Activated CD4-positive, alpha-beta memory T cell treated with anti-CD3 and anti-CD28 coated beads for 36 hours (primary cell): ENCODE measurements at regions of chr11 and their contacts with region 1.

Region 1: GRCh38 chr11:5476184-5476819 is 12.2 kb upstream of the OR52D1 start:
- DNase-seq: peak; percentile 42
- H3K4me3 Mint-ChIP-seq: no peak overlapping the region
- H3K27ac Mint-ChIP-seq: no peak overlapping the region
- H3K4me1 Mint-ChIP-seq: no peaks in the 10 kb centered on the region
- H3K27me3 Mint-ChIP-seq: peaks cover 21% of the 10 kb centered on the region

Region 2: DNA sequence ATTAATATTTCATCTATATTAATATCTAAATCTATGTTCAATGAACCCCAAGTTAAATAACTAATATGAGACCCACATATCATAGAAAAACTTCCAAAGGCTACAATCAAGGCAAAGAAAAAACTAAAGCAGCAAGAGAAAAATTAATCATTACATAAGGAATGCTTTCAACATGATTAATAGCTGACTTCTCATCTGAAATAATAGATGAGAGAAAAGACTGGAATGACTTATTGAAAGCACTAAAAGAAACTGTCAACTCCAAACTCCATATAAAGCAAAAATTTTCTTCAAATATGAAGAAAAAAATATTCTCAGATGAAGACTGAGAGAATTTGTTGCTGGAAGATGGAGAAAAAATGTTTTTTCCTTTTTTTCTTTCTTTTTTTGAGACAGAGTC is 195.5 kb after region 1 on chr11:
- CTCF ChIA-PET with region 1: no interaction called
- POLR2A ChIA-PET with region 1: no interaction called
- intact Hi-C with region 1: no loop called
- DNase-seq: no peak
- H3K4me3 Mint-ChIP-seq: no peak overlapping the region
- H3K27ac Mint-ChIP-seq: no peak overlapping the region
- H3K4me1 Mint-ChIP-seq: peaks cover 13% of the 10 kb centered on the region
- H3K27me3 Mint-ChIP-seq: no peaks in the 10 kb centered on the region

Region 3: DNA sequence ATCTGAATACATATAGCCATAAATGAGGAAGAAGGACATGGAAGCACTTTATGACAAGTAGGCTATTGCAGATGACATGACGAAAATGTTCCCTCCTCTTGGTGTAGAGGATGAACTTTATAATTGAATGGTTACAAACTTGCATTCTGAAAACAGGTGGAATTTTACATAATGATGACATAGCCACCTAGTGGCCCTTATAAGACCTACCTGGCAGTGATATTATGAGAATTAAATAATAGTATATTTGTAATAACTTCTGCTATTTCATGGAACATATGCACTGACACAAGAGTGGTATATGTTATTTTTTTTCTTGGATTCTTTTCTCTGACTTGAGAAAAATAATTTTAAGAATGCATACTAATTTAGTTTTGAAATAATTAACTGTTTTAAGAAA is 236.2 kb after region 1 on chr11:
- CTCF ChIA-PET with region 1: interaction called, 5 read pairs
- POLR2A ChIA-PET with region 1: no interaction called
- intact Hi-C with region 1: loop called (anchors 1 kb)
- DNase-seq: no peak
- H3K4me3 Mint-ChIP-seq: no peak overlapping the region
- H3K27ac Mint-ChIP-seq: no peak overlapping the region
- H3K4me1 Mint-ChIP-seq: peaks cover 4% of the 10 kb centered on the region
- H3K27me3 Mint-ChIP-seq: no peaks in the 10 kb centered on the region

Region 4: DNA sequence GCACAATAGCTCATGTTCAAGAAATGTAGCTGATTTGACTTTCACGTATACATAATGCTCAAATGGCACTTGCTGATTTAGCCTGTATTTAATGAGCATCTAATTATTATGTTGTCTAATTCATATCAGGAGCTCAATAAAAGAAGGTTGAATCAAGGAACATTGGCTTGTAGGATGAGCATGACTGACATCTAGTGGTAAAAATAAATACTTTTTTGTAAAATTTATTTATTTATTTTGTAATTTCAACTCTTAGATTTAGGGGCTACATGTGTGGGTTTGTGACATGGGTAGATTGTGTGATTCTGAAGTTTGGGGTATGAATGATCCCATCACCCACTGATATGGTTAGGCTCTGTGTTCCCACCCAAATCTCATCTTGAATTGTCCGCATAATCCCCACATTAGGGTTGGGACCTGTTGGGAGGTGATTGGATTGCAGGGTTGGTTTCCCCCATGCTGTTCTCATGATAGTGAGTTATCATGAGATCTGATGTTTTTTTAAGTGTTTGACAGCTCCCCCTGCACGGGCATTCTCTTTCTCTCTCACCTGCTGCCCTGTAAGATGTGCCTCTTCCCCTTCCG is 415.0 kb after region 1 on chr11:
- CTCF ChIA-PET with region 1: interaction called, 9 read pairs
- POLR2A ChIA-PET with region 1: no interaction called
- intact Hi-C with region 1: loop called (anchors 1 kb)
- DNase-seq: no peak
- H3K4me3 Mint-ChIP-seq: no peak overlapping the region
- H3K27ac Mint-ChIP-seq: no peak overlapping the region
- H3K4me1 Mint-ChIP-seq: no peaks in the 10 kb centered on the region
- H3K27me3 Mint-ChIP-seq: peaks cover 2% of the 10 kb centered on the region